ENCODE measurements at regions of chr4 and their contacts with region 1.

Region 1: DNA sequence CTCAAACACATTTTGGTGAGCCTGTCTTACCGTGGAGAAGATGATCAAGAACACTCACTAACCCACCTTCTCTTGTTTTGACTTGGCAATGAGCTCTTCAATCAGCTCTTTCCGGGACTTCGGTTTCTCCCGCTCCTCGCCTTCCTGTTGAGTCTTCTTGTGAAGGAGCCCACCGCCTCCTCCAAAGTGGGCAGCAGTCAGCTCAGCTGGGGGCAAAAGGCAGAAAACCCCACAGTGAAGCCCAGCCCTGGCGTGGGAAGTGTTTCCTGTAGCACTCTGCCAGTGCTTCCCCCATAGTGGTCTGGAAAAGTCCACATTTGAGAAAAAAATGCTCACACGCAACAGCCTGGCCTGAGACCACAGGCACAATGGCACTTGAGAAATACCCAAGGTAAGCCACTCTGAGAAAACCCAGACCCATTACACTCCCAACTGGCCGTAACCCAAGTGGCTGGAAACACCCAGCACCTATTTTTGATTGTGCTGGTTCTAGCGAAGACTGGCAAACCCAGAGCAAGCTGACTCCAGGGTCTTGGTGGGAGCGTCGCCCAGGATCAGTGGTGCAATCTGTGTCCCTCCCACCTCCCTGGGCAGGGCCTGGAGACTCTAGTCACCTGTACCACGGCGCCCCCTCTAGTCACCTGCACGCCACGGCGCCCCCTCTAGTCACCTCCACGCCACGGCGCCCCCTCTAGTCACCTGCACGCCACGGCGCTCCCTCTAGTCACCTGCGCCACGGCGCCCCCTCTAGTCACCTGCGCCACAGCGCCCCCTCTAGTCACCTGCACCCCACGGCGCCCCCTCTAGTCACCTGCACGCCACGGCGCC is 8.6 kb downstream of the NOP14 start:
- DNase-seq: no peak
- H3K4me3 ChIP-seq: no peak overlapping the region
- H3K27ac ChIP-seq: no peak overlapping the region
- H3K4me1 ChIP-seq: no peaks in the 10 kb centered on the region
- H3K27me3 ChIP-seq: no peaks in the 10 kb centered on the region
- CTCF ChIP-seq: no peak

Region 2: DNA sequence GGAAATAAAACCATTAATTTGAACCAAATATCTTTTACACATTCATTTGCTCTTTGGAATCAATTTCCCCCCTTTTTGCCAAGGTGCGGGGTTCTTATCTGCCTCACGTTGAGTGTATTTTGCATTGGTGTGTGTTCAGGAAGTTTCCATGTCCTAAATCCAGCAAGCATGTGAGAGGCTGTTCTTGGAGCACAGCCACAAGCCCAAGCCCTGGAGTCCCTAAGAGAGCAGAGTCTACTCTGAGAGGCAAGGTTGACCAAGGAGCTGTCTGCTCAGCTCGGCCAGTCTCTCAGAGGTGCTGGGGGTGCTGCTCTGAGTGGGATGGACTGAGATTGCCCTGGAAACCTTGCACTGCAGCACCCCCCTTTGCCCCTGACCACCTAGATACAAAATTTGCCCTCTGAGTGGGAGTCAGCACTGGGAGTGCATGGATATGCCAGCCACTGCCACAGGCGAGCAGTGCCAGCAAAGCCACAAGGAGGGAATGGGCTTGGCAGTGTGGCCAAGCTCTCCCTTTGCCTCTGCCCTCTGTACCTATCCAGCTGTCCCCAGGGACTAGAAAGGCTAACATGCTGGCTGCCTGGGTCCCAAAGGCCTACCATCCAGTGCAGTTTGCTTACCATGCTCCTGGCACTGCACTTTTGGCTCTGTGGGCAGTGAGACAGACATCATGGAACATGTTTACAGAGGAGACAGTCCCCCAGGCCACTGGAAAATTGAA is 438.6 kb before region 1 on chr4:
- CTCF ChIA-PET with region 1: no interaction called
- POLR2A ChIA-PET with region 1: interaction called, 16 read pairs
- intact Hi-C with region 1: no loop called
- DNase-seq: no peak
- H3K4me3 ChIP-seq: no peak overlapping the region
- H3K27ac ChIP-seq: no peak overlapping the region
- H3K4me1 ChIP-seq: no peaks in the 10 kb centered on the region
- H3K27me3 ChIP-seq: no peaks in the 10 kb centered on the region
- CTCF ChIP-seq: no peak

Region 3: GRCh38 chr4:3021627-3022026 is 67.1 kb after region 1 on chr4:
- CTCF ChIA-PET with region 1: no interaction called
- POLR2A ChIA-PET with region 1: no interaction called
- intact Hi-C with region 1: no loop called
- DNase-seq: no peak
- H3K4me3 ChIP-seq: no peak overlapping the region
- H3K27ac ChIP-seq: no peak overlapping the region
- H3K4me1 ChIP-seq: no peaks in the 10 kb centered on the region
- H3K27me3 ChIP-seq: no peaks in the 10 kb centered on the region
- CTCF ChIP-seq: no peak

Region 4: DNA sequence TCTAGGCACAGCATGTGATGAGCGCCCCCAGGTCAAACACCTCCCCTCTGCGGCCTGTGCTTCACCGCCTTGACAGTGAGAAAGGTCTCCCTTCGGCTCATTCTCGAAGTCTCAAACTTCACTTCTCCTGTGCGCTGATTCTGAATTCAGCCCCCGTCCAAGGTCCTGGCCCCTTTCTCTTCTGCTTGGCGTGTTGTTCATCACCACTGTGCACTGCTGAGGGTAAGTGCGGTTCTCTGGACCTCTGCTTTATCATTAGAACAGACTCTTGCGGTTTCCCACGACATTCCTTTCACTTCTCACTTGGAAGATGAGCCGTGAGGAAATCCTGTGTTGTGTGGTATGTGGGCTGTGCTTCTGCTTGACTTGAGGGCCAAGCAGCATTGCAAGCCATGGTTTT is 107.9 kb after region 1 on chr4:
- CTCF ChIA-PET with region 1: no interaction called
- POLR2A ChIA-PET with region 1: no interaction called
- intact Hi-C with region 1: no loop called
- DNase-seq: no peak
- H3K4me3 ChIP-seq: no peak overlapping the region
- H3K27ac ChIP-seq: no peak overlapping the region
- H3K4me1 ChIP-seq: no peaks in the 10 kb centered on the region
- H3K27me3 ChIP-seq: no peaks in the 10 kb centered on the region
- CTCF ChIP-seq: no peak